CD8-positive, alpha-beta memory T cell (primary cell): ENCODE measurements at regions of chr6 and their contacts with region 1.

Region 1: DNA sequence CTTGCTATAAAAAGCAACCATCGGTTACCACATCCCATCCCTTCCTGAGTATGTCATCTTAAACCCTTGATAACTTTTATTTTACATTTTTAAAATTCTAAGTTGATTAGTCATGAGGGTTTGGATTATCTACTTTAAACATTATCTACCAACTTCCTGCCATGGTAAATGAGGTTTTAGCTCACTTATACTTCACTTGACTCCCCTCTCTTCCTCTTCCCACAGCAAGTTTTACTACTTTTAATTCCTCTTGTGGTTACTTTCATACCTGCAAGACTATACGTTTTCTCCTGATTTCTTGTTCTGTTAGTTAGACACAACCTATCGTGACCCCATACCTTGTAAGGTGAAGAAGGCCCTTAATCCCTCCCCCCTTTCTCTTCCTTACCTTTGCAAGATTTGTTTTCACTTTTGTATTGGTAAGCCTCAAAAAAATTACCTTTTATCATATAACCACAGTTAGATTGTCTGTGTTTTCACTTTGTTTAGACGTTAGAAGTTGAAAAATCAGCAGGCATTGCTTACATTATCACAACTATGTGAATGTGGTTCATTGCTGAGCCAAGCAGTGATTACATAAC is 60.1 kb upstream of the OGFRL1 start:
- DNase-seq: peak in 2 of 5 donors; percentile 45 to 52
- H3K4me3 ChIP-seq: no peak overlapping the region
- H3K4me3 Mint-ChIP-seq: peak overlapping the region; percentile 6 to 74 (median 52)
- H3K27ac ChIP-seq: no peak overlapping the region
- H3K27ac Mint-ChIP-seq: peak overlapping the region; percentile 26 to 92 (median 46)
- H3K4me1 ChIP-seq: peaks cover 18% of the 10 kb centered on the region
- H3K4me1 Mint-ChIP-seq: peaks cover 27 to 35% (median 29%) of the 10 kb centered on the region in 3 donors
- H3K27me3 ChIP-seq: no peaks in the 10 kb centered on the region
- H3K27me3 Mint-ChIP-seq: no peaks in the 10 kb centered on the region

Region 2: GRCh38 chr6:71124340-71124739 is 104.2 kb before region 1 on chr6:
- CTCF ChIA-PET with region 1: no interaction called
- POLR2A ChIA-PET with region 1: no interaction called
- DNase-seq: no peak
- H3K4me3 ChIP-seq: no peak overlapping the region
- H3K4me3 Mint-ChIP-seq: no peak overlapping the region
- H3K27ac ChIP-seq: no peak overlapping the region
- H3K27ac Mint-ChIP-seq: no peak overlapping the region
- H3K4me1 ChIP-seq: no peaks in the 10 kb centered on the region
- H3K4me1 Mint-ChIP-seq: no peaks in the 10 kb centered on the region
- H3K27me3 ChIP-seq: peaks cover 4% of the 10 kb centered on the region
- H3K27me3 Mint-ChIP-seq: peaks cover 0 to 7% of the 10 kb centered on the region in 2 donors

Region 3: DNA sequence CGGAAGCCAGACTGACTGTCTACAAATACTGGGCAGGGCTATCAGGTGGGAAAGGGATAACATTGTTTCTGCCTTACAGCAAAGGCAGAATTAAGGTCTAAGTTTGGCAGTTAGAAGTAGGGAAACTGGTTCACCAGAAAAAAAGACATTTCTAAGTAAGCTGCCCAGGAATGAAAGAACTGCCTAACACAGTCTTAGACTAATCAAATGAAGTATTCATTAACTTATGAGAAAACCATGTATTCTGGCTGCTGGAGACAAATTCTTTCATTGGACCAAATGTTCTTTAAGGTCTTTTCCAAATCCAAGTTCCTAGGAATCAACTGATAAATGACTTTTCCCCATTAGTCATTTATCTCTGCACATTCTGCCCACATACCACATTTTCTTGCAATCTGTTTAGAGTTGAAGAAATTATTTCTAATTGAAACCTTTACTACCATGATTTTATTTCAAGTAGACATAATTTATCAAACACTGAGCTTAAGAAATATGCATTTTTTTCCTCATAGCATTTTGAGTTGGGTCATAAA is 60.3 kb before region 1 on chr6:
- CTCF ChIA-PET with region 1: no interaction called
- POLR2A ChIA-PET with region 1: no interaction called
- DNase-seq: no peak
- H3K4me3 ChIP-seq: no peak overlapping the region
- H3K4me3 Mint-ChIP-seq: no peak overlapping the region
- H3K27ac ChIP-seq: no peak overlapping the region
- H3K27ac Mint-ChIP-seq: no peak overlapping the region
- H3K4me1 ChIP-seq: no peaks in the 10 kb centered on the region
- H3K4me1 Mint-ChIP-seq: no peaks in the 10 kb centered on the region
- H3K27me3 ChIP-seq: no peaks in the 10 kb centered on the region
- H3K27me3 Mint-ChIP-seq: peaks cover 0 to 6% of the 10 kb centered on the region in 2 donors

Region 4: GRCh38 chr6:71288228-71289001 is 59.9 kb after region 1 on chr6 and contains the start of gene OGFRL1:
- CTCF ChIA-PET with region 1: interaction called, 10 read pairs
- POLR2A ChIA-PET with region 1: interaction called, 7 read pairs
- DNase-seq: peak; percentile 61 to 81 (median 73)
- H3K4me3 ChIP-seq: peak within 1 kb of the TSS; percentile 54
- H3K4me3 Mint-ChIP-seq: peak within 1 kb of the TSS; percentile 83 to 94 (median 88)
- H3K27ac ChIP-seq: peak within 1 kb of the TSS; percentile 60
- H3K27ac Mint-ChIP-seq: peak within 1 kb of the TSS; percentile 75 to 94 (median 86)
- H3K4me1 ChIP-seq: peaks cover 14% of the 10 kb centered on the region
- H3K4me1 Mint-ChIP-seq: peaks cover 44 to 52% (median 50%) of the 10 kb centered on the region in 3 donors
- H3K27me3 ChIP-seq: no peaks in the 10 kb centered on the region
- H3K27me3 Mint-ChIP-seq: no peaks in the 10 kb centered on the region
- total RNA-seq, gene OGFRL1: 5.5 to 5.6 TPM